OCI-LY7 (cell line): ENCODE measurements at regions of chr1 and their contacts with region 1.

Region 1: GRCh38 chr1:114437812-114438211 is 73.2 kb downstream of the TRIM33 start:
- DNase-seq: no peak
- H3K4me3 ChIP-seq: no peak overlapping the region
- H3K27ac ChIP-seq: no peak overlapping the region
- H3K4me1 ChIP-seq: no peaks in the 10 kb centered on the region
- CTCF ChIP-seq: no peak

Region 2: GRCh38 chr1:114455102-114455785 is 17.4 kb after region 1 on chr1:
- CTCF ChIA-PET with region 1: no interaction called
- POLR2A ChIA-PET with region 1: interaction called, 3 read pairs
- intact Hi-C with region 1: loop called (anchors 2 kb)
- DNase-seq: no peak
- H3K4me3 ChIP-seq: no peak overlapping the region
- H3K27ac ChIP-seq: no peak overlapping the region
- H3K4me1 ChIP-seq: no peaks in the 10 kb centered on the region
- CTCF ChIP-seq: no peak